ENCODE measurements at regions of chr6 and their contacts with region 1.

Region 1: DNA sequence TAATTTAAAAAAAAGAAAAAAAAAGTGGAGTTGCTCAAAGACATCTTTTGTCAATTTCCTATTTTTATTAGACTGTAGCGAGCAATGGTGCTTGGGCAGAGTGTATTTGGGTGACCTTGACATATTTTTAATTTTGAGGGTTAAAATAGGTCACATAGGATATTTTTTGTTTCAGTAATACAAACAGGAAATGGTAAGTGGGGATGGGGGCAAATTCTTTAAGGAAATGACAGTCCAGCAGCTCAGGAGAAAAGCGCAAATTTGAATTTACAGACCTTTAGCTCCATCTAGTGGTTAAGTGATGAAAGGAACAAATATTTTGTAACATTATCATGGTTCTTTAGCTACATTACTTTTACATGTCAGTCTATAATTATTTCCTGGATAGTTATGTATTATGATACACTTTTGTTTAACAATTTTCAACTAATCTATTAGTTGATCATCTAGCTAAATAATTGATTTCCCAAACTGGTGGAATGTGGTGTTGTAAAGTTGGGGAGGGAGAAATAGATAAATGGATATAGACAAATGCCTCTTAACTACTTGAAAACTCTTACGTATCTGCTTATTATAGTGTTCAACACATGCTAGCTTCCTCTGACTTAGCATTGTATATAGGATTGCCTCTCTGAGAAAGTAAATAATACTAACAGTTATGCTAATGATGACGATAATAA is 10.0 kb downstream of the CITED2 start:
- DNase-seq: no peak
- ATAC-seq: peak; percentile 67
- H3K4me3 Mint-ChIP-seq: peak overlapping the region; percentile 9
- H3K27ac Mint-ChIP-seq: no peak overlapping the region
- H3K4me1 Mint-ChIP-seq: peaks cover 20% of the 10 kb centered on the region
- H3K27me3 Mint-ChIP-seq: no peaks in the 10 kb centered on the region
- CTCF ChIP-seq: peak; percentile 67

Region 2: GRCh38 chr6:138588805-138589434 is 775.5 kb before region 1 on chr6:
- CTCF ChIA-PET with region 1: interaction called, 10 read pairs
- POLR2A ChIA-PET with region 1: no interaction called
- intact Hi-C with region 1: loop called (anchors 2 kb)
- DNase-seq: no peak
- ATAC-seq: peak; percentile 48
- H3K4me3 Mint-ChIP-seq: no peak overlapping the region
- H3K27ac Mint-ChIP-seq: no peak overlapping the region
- H3K4me1 Mint-ChIP-seq: peaks cover 27% of the 10 kb centered on the region
- H3K27me3 Mint-ChIP-seq: no peaks in the 10 kb centered on the region
- CTCF ChIP-seq: peak; percentile 71

Region 3: DNA sequence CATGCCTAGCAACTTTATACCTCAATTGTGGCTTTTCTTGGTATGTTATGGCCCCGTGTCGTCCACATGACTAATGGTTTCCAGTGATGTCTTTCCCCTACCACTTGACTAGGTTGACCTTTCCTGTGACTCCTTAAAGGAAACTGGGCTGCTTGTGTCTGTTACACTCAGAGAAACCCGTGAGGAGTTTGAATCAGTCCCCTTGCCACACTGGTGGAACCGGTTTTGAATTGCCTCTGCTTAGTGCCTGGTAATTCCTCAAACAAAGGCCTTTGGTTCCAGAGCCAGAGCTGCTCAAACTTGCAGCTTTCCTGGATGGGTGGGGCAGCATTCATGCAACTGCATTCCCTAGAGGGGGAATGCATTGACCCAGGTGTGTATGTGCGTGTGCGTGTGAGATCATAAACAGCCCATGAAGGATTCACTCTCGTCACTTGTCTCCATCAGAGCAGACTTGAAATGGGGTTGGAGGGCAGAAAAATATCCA is 546.6 kb before region 1 on chr6:
- CTCF ChIA-PET with region 1: interaction called, 36 read pairs
- POLR2A ChIA-PET with region 1: interaction called, 3 read pairs
- intact Hi-C with region 1: loop called (anchors 1 kb)
- DNase-seq: no peak
- ATAC-seq: no peak
- H3K4me3 Mint-ChIP-seq: no peak overlapping the region
- H3K27ac Mint-ChIP-seq: peak overlapping the region; percentile 70
- H3K4me1 Mint-ChIP-seq: peaks cover 32% of the 10 kb centered on the region
- H3K27me3 Mint-ChIP-seq: no peaks in the 10 kb centered on the region
- CTCF ChIP-seq: no peak

Region 4: GRCh38 chr6:139219271-139219729 is 145.1 kb before region 1 on chr6:
- CTCF ChIA-PET with region 1: interaction called, 220 read pairs
- POLR2A ChIA-PET with region 1: interaction called, 12 read pairs
- intact Hi-C with region 1: loop called (anchors 1 kb)
- DNase-seq: peak; percentile 52
- ATAC-seq: peak; percentile 100
- H3K4me3 Mint-ChIP-seq: peak overlapping the region; percentile 24
- H3K27ac Mint-ChIP-seq: peak overlapping the region; percentile 73
- H3K4me1 Mint-ChIP-seq: peaks cover 12% of the 10 kb centered on the region
- H3K27me3 Mint-ChIP-seq: no peaks in the 10 kb centered on the region
- CTCF ChIP-seq: no peak

Region 5: GRCh38 chr6:139271056-139271455 is 93.4 kb before region 1 on chr6:
- CTCF ChIA-PET with region 1: interaction called, 7 read pairs
- POLR2A ChIA-PET with region 1: interaction called, 3 read pairs
- intact Hi-C with region 1: loop called (anchors 2 kb)
- DNase-seq: no peak
- ATAC-seq: peak; percentile 94
- H3K4me3 Mint-ChIP-seq: peak overlapping the region; percentile 75
- H3K27ac Mint-ChIP-seq: peak overlapping the region; percentile 96
- H3K4me1 Mint-ChIP-seq: peaks cover 80% of the 10 kb centered on the region
- H3K27me3 Mint-ChIP-seq: no peaks in the 10 kb centered on the region
- CTCF ChIP-seq: no peak

Region 6: DNA sequence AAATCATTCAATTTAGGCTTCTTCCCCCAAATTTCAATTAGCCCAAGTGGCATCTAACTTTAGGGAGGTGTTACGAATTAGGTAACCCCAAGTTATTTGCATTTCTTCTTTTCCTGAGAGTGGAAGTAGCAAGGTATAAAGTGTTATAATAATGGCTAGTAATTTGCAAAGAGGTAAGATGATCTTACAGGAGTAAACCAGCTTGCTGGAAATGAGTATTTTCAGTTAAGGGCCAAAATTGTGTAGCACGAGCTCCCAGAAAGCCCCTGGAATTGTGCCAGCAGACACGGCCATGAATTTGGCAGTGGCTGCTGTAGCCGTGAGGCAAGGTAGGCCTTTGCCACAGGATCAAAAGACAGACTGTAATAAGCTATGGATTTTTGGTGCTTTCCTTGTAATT is 28.0 kb before region 1 on chr6:
- CTCF ChIA-PET with region 1: interaction called, 4 read pairs
- POLR2A ChIA-PET with region 1: no interaction called
- intact Hi-C with region 1: loop called (anchors 2 kb)
- DNase-seq: no peak
- ATAC-seq: no peak
- H3K4me3 Mint-ChIP-seq: no peak overlapping the region
- H3K27ac Mint-ChIP-seq: no peak overlapping the region
- H3K4me1 Mint-ChIP-seq: peaks cover 9% of the 10 kb centered on the region
- H3K27me3 Mint-ChIP-seq: no peaks in the 10 kb centered on the region
- CTCF ChIP-seq: no peak

Region 7: GRCh38 chr6:139490482-139490881 is 126.0 kb after region 1 on chr6:
- CTCF ChIA-PET with region 1: no interaction called
- POLR2A ChIA-PET with region 1: no interaction called
- intact Hi-C with region 1: no loop called
- DNase-seq: no peak
- ATAC-seq: peak; percentile 5
- H3K4me3 Mint-ChIP-seq: peak overlapping the region; percentile 8
- H3K27ac Mint-ChIP-seq: peak overlapping the region; percentile 8
- H3K4me1 Mint-ChIP-seq: peaks cover 9% of the 10 kb centered on the region
- H3K27me3 Mint-ChIP-seq: no peaks in the 10 kb centered on the region
- CTCF ChIP-seq: no peak